ENCODE measurements at regions of chr5 and their contacts with region 1.

Region 1: GRCh38 chr5:139392678-139393496 is 2.0 kb downstream of the PROB1 start:
- DNase-seq: peak; percentile 84
- H3K4me3 Mint-ChIP-seq: peak overlapping the region; percentile 96
- H3K27ac Mint-ChIP-seq: peak overlapping the region; percentile 97
- H3K4me1 Mint-ChIP-seq: peaks cover 51% of the 10 kb centered on the region
- H3K27me3 Mint-ChIP-seq: no peaks in the 10 kb centered on the region

Region 2: DNA sequence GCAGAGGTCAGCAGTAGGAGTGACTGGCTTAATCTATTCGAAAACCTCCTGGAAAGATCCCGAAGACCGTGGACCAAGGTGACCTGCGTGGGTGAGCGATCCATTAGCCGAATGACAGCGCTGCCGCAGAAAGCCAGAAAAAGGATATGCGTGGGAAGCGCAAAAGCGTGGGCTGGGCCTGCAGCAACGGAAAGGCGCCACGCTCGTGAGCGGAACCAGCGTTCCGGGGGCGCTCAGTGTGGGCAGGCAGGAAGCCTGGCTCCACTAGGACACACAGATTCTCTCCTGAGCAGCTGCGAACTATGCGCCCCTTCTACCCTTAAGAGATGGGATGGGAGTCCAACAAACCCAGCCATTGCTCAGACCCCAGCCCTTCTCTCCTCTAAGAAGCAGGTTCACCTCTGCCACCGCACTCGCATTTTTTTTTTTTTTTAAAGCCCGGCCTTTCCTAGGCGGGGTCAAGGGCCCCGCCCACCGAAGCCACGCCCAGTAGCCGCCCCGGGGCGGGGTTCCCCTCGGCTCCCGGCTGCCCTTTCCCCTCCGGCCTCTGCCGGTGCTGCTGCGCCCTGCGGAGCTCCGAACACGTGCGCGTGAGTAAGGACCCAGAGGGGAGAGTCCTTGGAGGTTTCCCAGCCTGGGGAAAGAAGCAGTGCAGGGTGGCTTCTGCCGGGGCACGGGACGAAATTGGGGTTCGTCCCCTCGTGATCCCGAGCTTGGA is 119.2 kb before region 1 on chr5:
- intact Hi-C with region 1: loop called (anchors 5 kb)
- DNase-seq: peak; percentile 88
- H3K4me3 Mint-ChIP-seq: peak overlapping the region; percentile 94
- H3K27ac Mint-ChIP-seq: peak overlapping the region; percentile 42
- H3K4me1 Mint-ChIP-seq: peaks cover 42% of the 10 kb centered on the region
- H3K27me3 Mint-ChIP-seq: no peaks in the 10 kb centered on the region

Region 3: GRCh38 chr5:139341650-139342422 is 51.1 kb before region 1 on chr5 and contains the start of gene PAIP2:
- intact Hi-C with region 1: loop called (anchors 1 kb)
- DNase-seq: peak; percentile 97
- H3K4me3 Mint-ChIP-seq: peak within 1 kb of the TSS; percentile 93
- H3K27ac Mint-ChIP-seq: peak within 1 kb of the TSS; percentile 98
- H3K4me1 Mint-ChIP-seq: peaks cover 27% of the 10 kb centered on the region
- H3K27me3 Mint-ChIP-seq: no peaks in the 10 kb centered on the region
- total RNA-seq, gene PAIP2: 98.2 and 107 TPM in 2 replicates

Region 4: DNA sequence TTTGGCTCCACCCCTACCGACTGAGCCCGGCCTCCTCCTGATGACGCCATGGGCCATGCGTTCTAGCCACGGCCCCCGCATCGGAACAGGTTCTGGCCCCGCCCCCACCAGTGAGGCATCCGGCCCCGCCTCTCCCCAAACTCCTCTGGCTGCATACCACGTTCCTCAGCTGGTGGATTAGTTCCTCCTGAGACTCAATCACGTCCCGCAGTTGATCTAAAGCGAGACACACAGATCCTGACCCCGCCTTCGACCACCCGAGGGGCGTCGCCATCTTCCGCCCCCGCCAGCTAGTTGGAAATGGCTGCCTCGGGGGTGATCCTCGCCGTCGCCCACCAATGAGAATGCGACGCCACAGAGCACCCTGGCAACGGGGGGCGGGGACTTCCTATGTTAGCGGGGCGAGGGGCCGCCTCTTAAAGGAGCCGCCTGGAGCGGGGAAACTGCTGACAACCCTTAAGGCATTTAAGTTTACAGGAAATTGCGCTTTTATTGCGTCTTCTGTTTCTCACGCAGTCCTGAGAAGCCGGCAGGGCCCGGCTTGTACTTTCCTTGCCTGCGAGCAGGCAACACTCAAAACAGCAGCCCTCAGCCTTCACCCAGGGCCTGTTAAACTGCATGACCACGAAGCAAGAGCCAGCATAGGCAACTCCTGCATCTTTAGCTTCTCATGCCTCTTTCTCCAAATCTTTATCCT is 11.0 kb after region 1 on chr5 and contains the start of gene SPATA24:
- intact Hi-C with region 1: loop called (anchors 1 kb)
- DNase-seq: peak; percentile 98
- H3K4me3 Mint-ChIP-seq: peak within 1 kb of the TSS; percentile 92
- H3K27ac Mint-ChIP-seq: peak within 1 kb of the TSS; percentile 100
- H3K4me1 Mint-ChIP-seq: peaks cover 31% of the 10 kb centered on the region
- H3K27me3 Mint-ChIP-seq: no peaks in the 10 kb centered on the region
- total RNA-seq, gene SPATA24: 4.7 and 4.8 TPM in 2 replicates

Region 5: DNA sequence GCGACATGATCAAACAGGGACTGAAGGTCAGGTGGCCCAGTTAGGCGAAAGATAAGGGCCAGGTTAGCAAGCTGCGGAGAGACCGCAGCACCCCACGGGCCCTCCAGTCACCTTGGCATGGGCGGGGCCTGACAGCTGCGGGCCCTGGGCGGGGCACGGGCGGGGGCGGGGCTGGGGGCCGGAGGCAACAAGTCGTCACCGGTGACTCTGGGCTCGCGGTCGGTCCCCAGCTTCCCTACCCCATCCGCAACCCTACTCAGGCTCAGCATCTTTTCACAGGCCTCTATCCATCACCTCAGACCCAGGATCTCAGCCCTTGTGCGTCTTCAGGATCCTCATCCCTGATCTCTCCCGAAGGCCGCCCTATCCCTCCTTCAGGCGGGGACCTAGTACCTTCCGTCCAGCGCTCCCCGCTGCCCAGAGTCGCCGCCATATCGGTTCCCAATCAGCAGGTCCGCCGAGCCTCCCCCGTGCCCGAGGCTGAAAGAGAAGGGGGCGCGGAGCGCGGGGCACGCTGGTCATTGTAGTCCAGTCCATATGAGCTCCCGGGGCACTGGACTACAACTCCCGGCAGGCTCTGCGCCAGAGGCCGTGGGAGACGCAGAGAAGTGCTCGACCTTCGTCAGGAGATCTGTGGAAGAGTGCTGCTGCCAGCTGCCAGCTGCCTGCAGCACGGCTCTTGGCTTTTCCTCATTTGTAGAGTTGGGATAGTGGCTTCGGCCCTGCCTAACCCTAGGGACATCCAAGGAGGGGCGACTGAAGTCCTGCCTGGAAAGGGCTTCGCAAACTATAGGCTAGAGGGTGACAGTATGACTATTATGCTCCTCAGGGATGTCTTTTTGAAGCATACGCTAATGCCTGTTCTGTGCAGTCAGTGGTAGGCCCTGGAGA is 46.4 kb after region 1 on chr5 and contains the start of gene DNAJC18:
- intact Hi-C with region 1: loop called (anchors 2 kb)
- DNase-seq: peak; percentile 84
- H3K4me3 Mint-ChIP-seq: peak within 1 kb of the TSS; percentile 93
- H3K27ac Mint-ChIP-seq: peak within 1 kb of the TSS; percentile 98
- H3K4me1 Mint-ChIP-seq: peaks cover 58% of the 10 kb centered on the region
- H3K27me3 Mint-ChIP-seq: no peaks in the 10 kb centered on the region
- total RNA-seq, gene DNAJC18: 29.8 and 35.8 TPM in 2 replicates

Region 6: GRCh38 chr5:139458580-139459406 is 65.9 kb after region 1 on chr5:
- intact Hi-C with region 1: loop called (anchors 2 kb)
- DNase-seq: peak; percentile 77
- H3K4me3 Mint-ChIP-seq: peak overlapping the region; percentile 72
- H3K27ac Mint-ChIP-seq: peak overlapping the region; percentile 99
- H3K4me1 Mint-ChIP-seq: peaks cover 59% of the 10 kb centered on the region
- H3K27me3 Mint-ChIP-seq: no peaks in the 10 kb centered on the region

Measured in activated T-helper 2 cell treated with anti-CD3 and anti-CD28 coated beads, Interferon-gamma antibody, Interleukin-2, Interleukin-4, amounts not matched to agents 10 μg/mL and 5 μg/mL and 100 μg/mL, durations not matched to agents 14 hours and 24 hours and 36 hours (primary cell).